Endothelial cell of umbilical vein (primary cell): ENCODE measurements at regions of chr12 and their contacts with region 1.

Region 1: GRCh38 chr12:46391630-46392029 is 19.1 kb upstream of the SLC38A2 start:
- DNase-seq: no peak
- H3K4me3 ChIP-seq: no peak overlapping the region
- H3K27ac ChIP-seq: no peak overlapping the region
- H3K4me1 ChIP-seq: peaks cover 40% of the 10 kb centered on the region
- H3K27me3 ChIP-seq: no peaks in the 10 kb centered on the region
- CTCF ChIP-seq: no peak
- POLR2A ChIP-seq: no peak

Region 2: DNA sequence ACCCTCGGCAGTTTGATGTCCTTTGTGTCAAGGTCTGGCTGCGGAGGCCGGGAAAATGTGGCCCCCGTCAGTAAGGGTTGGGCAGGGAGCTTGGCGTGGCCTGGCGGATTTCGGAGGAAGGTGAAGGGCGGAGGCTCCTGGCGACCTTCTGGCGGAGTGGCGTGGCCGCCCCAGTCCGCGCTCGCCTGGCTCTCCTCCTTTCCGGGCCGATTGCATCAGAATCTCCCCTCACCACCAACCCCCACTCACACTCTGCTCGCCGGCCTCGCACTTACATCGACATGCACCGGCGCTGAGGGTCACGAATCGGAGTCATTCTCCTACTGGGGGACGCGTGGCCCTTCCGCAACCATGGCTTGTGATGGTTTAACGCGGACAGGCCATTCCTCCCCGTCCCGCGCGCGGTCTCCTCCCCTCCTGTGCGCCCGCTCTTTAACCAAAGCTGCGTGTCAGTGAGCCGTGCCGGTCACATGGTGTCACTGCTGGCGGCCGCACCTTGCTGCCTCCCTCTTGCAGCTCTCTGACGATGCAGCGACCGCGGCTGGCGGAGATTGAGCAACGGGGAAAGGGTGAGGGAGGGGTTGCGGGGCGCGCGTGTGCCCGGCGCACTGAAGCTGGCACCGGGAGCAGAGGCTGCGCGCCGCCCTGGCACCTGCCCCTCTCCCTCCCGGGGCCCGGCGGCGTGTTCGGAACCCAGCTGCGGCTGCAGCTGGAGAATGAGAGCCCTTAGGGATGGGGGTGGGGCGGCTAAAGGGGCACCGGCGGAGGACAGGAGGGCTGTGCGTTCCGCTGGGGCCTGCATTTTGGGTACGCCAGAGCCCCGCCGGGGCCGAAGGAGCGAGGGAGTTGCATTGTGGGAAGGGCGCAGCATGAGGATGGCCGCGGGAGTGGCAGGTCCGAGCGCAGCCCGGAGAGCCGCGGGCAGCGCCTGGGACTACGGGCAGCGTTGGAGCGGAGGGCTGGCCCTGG is 122.8 kb before region 1 on chr12 and contains the start of gene SLC38A1:
- CTCF ChIA-PET with region 1: no interaction called
- POLR2A ChIA-PET with region 1: no interaction called
- dilution Hi-C with region 1: no loop called
- intact Hi-C with region 1: no loop called
- DNase-seq: peak; percentile 73
- H3K4me3 ChIP-seq: peak within 1 kb of the TSS; percentile 59 to 85 (median 84)
- H3K27ac ChIP-seq: peak within 1 kb of the TSS; percentile 82
- H3K4me1 ChIP-seq: peaks cover 31% of the 10 kb centered on the region
- H3K27me3 ChIP-seq: no peaks in the 10 kb centered on the region
- CTCF ChIP-seq: no peak
- POLR2A ChIP-seq: peak; percentile 66
- total RNA-seq, gene SLC38A1: 81.0 and 86.4 TPM in 2 replicates

Region 3: GRCh38 chr12:46401662-46402061 is 10.0 kb after region 1 on chr12:
- CTCF ChIA-PET with region 1: interaction called, 11 read pairs
- POLR2A ChIA-PET with region 1: no interaction called
- dilution Hi-C with region 1: no loop called
- intact Hi-C with region 1: no loop called
- DNase-seq: peak; percentile 49
- H3K4me3 ChIP-seq: no peak overlapping the region
- H3K27ac ChIP-seq: no peak overlapping the region
- H3K4me1 ChIP-seq: peaks cover 20% of the 10 kb centered on the region
- H3K27me3 ChIP-seq: no peaks in the 10 kb centered on the region
- CTCF ChIP-seq: no peak
- POLR2A ChIP-seq: no peak

Region 4: GRCh38 chr12:46419675-46420074 is 28.0 kb after region 1 on chr12:
- CTCF ChIA-PET with region 1: no interaction called
- POLR2A ChIA-PET with region 1: no interaction called
- dilution Hi-C with region 1: no loop called
- intact Hi-C with region 1: no loop called
- DNase-seq: no peak
- H3K4me3 ChIP-seq: no peak overlapping the region
- H3K27ac ChIP-seq: no peak overlapping the region
- H3K4me1 ChIP-seq: no peaks in the 10 kb centered on the region
- H3K27me3 ChIP-seq: no peaks in the 10 kb centered on the region
- CTCF ChIP-seq: no peak
- POLR2A ChIP-seq: no peak